Endothelial cell of umbilical vein (primary cell): ENCODE measurements at regions of chr12 and their contacts with region 1.

Region 1: GRCh38 chr12:42482445-42483237 is 106.9 kb downstream of the PRICKLE1 start:
- DNase-seq: peak; percentile 78
- H3K4me3 ChIP-seq: peak overlapping the region; percentile 59 to 69 (median 59)
- H3K27ac ChIP-seq: peak overlapping the region; percentile 96
- H3K4me1 ChIP-seq: peaks cover 54% of the 10 kb centered on the region
- H3K27me3 ChIP-seq: no peaks in the 10 kb centered on the region
- CTCF ChIP-seq: peak; percentile 91 to 93
- POLR2A ChIP-seq: peak; percentile 56

Region 2: GRCh38 chr12:41264281-41264680 is 1218.4 kb before region 1 on chr12:
- CTCF ChIA-PET with region 1: no interaction called
- POLR2A ChIA-PET with region 1: no interaction called
- dilution Hi-C with region 1: no loop called
- intact Hi-C with region 1: loop called (anchors 5 kb)
- DNase-seq: peak; percentile 16
- H3K4me3 ChIP-seq: no peak overlapping the region
- H3K27ac ChIP-seq: no peak overlapping the region
- H3K4me1 ChIP-seq: no peaks in the 10 kb centered on the region
- H3K27me3 ChIP-seq: no peaks in the 10 kb centered on the region
- CTCF ChIP-seq: peak; percentile 13 to 16
- POLR2A ChIP-seq: no peak

Region 3: DNA sequence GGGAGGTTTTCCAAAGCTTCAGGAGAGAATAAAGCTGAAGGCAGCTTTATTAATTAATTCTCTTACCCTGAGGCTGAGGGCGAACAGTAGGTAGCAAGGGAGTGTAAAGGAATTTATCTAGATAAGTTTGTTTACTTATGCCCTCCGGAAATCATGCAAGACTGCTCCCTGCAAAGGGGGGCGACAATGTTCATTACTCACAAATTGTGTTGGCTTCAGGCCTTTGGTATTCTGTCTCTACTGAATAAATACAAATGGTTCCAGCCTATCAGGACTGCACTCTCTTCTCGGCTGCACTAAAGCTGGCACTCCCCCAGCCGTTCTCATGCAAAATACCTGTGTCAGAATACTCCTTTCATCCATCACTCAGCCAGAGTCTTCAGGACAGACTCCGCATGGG is 35.9 kb before region 1 on chr12:
- CTCF ChIA-PET with region 1: no interaction called
- POLR2A ChIA-PET with region 1: interaction called, 3 read pairs
- dilution Hi-C with region 1: no loop called
- intact Hi-C with region 1: loop called (anchors 1 kb)
- DNase-seq: peak; percentile 77
- H3K4me3 ChIP-seq: no peak overlapping the region
- H3K27ac ChIP-seq: peak overlapping the region; percentile 39
- H3K4me1 ChIP-seq: peaks cover 35% of the 10 kb centered on the region
- H3K27me3 ChIP-seq: no peaks in the 10 kb centered on the region
- CTCF ChIP-seq: no peak
- POLR2A ChIP-seq: peak; percentile 27

Region 4: DNA sequence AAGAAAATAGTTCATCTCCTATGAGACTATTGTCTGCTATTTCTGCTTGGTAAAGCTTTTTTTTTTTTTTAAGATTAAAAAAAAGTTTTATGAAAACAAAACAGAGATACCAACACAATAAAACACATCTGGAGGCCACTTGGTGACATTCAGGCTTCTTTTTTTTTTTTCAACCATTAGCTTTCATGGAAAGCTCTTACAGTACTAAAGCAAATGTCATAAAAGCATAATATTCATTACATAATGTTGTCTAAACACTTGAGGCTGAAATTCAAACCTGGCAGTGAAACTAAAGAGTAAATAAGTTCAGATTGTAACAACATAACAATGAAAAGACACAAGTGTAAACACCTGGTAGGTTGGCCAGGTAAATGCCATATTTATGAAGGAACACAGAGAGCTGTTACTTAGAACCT is 92.2 kb after region 1 on chr12:
- CTCF ChIA-PET with region 1: interaction called, 53 read pairs
- POLR2A ChIA-PET with region 1: interaction called, 7 read pairs
- dilution Hi-C with region 1: no loop called
- intact Hi-C with region 1: no loop called
- DNase-seq: peak; percentile 37
- H3K4me3 ChIP-seq: no peak overlapping the region
- H3K27ac ChIP-seq: peak overlapping the region; percentile 35
- H3K4me1 ChIP-seq: peaks cover 59% of the 10 kb centered on the region
- H3K27me3 ChIP-seq: no peaks in the 10 kb centered on the region
- CTCF ChIP-seq: no peak
- POLR2A ChIP-seq: no peak

Region 5: DNA sequence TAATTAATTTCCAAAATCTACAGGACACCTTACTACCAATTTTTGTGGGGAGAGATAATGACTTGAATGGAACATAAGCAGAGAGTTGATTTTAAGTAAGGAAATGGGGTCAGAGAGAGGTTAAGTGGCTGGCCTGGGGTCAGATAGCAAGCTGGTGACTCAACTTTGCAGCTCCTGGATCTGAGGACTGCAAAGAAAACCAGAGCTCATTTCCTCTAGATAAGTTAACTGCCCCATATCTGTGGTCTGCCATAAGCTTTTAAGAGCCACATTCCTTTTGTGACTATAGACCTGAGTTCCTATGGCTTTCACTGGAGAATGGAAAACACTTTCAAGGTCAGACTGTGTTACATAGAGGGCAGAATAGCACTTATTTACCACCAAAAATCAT is 308.1 kb after region 1 on chr12:
- CTCF ChIA-PET with region 1: interaction called, 16 read pairs
- POLR2A ChIA-PET with region 1: interaction called, 3 read pairs
- dilution Hi-C with region 1: no loop called
- intact Hi-C with region 1: loop called (anchors 1 kb)
- DNase-seq: peak; percentile 96
- H3K4me3 ChIP-seq: peak overlapping the region in 1 of 3 experiments; percentile 2
- H3K27ac ChIP-seq: peak overlapping the region; percentile 75
- H3K4me1 ChIP-seq: peaks cover 32% of the 10 kb centered on the region
- H3K27me3 ChIP-seq: no peaks in the 10 kb centered on the region
- CTCF ChIP-seq: no peak
- POLR2A ChIP-seq: peak; percentile 60

Region 6: DNA sequence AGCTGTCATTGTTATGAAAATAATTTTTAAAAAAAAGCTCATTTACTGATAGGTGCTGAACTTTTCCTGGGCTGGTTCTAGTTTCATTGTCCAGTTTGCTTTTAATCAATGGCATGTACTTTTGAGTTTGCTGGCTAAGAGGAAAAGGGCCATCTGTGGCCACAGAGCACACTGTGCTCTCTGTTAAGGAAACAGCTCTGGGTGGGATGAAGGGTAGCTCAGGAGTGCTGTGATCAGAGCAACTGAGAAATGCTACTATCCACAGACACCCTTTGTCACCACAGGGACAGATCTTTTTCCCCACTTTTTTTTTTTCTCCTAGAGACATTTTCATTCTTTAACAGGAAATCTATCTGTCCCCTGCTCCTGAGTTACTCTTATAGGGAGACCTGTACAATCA is 494.0 kb after region 1 on chr12:
- CTCF ChIA-PET with region 1: no interaction called
- POLR2A ChIA-PET with region 1: no interaction called
- dilution Hi-C with region 1: no loop called
- intact Hi-C with region 1: no loop called
- DNase-seq: no peak
- H3K4me3 ChIP-seq: no peak overlapping the region
- H3K27ac ChIP-seq: peak overlapping the region; percentile 18
- H3K4me1 ChIP-seq: peaks cover 14% of the 10 kb centered on the region
- H3K27me3 ChIP-seq: no peaks in the 10 kb centered on the region
- CTCF ChIP-seq: no peak
- POLR2A ChIP-seq: no peak

Region 7: GRCh38 chr12:43087195-43088091 is 604.8 kb after region 1 on chr12:
- CTCF ChIA-PET with region 1: no interaction called
- POLR2A ChIA-PET with region 1: no interaction called
- dilution Hi-C with region 1: no loop called
- intact Hi-C with region 1: loop called (anchors 10 kb)
- DNase-seq: no peak
- H3K4me3 ChIP-seq: no peak overlapping the region
- H3K27ac ChIP-seq: no peak overlapping the region
- H3K4me1 ChIP-seq: no peaks in the 10 kb centered on the region
- H3K27me3 ChIP-seq: no peaks in the 10 kb centered on the region
- CTCF ChIP-seq: no peak
- POLR2A ChIP-seq: no peak

Region 8: DNA sequence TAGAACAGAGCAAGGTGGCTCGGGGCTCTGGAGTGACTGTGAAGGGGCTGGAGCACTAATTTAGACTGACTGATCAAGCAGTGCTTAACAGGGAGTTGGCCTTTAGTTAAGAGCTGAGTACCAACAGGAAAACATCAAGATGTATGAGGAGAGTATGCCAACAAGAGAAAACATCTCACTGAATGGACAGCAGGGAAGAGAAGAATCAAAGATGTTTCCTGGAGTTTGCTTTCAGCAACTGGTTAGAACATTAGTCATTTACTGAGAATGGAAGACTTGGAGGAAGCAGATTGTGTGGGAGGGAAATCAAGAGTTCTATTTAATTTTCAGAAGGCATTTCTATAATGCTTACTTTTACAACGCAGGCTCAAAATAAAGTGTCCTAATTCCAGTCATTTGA is 810.1 kb after region 1 on chr12:
- CTCF ChIA-PET with region 1: interaction called, 10 read pairs
- POLR2A ChIA-PET with region 1: no interaction called
- dilution Hi-C with region 1: no loop called
- intact Hi-C with region 1: no loop called
- DNase-seq: peak; percentile 93
- H3K4me3 ChIP-seq: no peak overlapping the region
- H3K27ac ChIP-seq: peak overlapping the region; percentile 47
- H3K4me1 ChIP-seq: peaks cover 44% of the 10 kb centered on the region
- H3K27me3 ChIP-seq: no peaks in the 10 kb centered on the region
- CTCF ChIP-seq: no peak
- POLR2A ChIP-seq: no peak